Gastrocnemius medialis (tissue), 4 donors: ENCODE measurements at regions of chr18 and their contacts with region 1.

Region 1: DNA sequence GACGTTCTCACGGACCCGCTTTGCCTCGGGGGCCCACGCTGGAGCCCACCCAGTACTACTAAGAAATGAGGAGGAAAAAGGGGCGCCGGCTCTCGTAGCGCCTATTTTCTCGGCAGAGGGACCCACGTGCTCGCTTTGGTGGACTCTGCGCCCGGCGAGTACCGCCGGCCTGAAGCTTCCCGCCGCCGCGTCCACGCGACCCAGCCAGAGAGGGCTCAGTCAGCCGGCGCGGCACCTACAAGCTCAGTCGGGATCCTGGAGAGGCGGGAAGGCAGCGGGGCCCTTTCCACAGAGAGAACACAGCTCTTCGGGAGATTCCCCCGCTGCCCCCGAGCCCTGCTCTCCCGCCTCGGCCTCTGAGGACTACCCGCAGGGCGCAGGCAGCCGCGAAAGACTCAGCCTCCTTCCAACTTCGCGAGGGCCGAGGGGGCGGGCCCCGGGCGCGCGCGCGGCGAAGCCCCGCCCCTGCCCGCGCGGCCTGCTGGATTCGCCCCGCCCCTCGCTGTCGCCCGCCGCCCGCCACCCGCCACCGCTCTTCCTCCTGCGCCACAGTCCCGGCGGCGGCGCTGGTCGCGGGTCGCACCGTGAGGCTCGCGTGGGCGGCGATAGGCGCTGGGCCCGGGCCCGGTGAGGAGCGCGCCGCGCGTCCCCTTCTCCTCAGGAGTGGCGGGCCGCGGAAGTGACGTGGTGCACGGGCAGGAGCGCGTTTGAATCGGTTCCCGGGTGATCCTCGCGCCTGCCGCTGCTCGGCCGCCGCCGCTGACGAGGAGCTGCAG is at the start of gene SMCHD1:
- DNase-seq: peak; percentile 76 to 84
- ATAC-seq: peak; percentile 88 to 89
- H3K4me3 ChIP-seq: peak within 1 kb of the TSS; percentile 91 to 97 (median 93)
- H3K27ac ChIP-seq: peak within 1 kb of the TSS; percentile 93 to 99 (median 96)
- H3K4me1 ChIP-seq: peaks cover 25 to 30% of the 10 kb centered on the region in 2 donors
- H3K27me3 ChIP-seq: no peaks in the 10 kb centered on the region
- CTCF ChIP-seq: peak in 1 of 5 experiments; percentile 23
- POLR2A ChIP-seq: peak; percentile 89 to 93
- total RNA-seq, gene SMCHD1: 16.2 to 43.6 (median 22.7) TPM

Region 2: GRCh38 chr18:812376-813171 is 1842.8 kb before region 1 on chr18:
- in situ Hi-C with region 1: no loop called
- intact Hi-C with region 1: loop called (anchors 10 kb)
- DNase-seq: peak; percentile 62 to 77
- ATAC-seq: peak; percentile 69 to 76
- H3K4me3 ChIP-seq: peak overlapping the region; percentile 75 to 96 (median 86)
- H3K27ac ChIP-seq: peak overlapping the region; percentile 93 to 96 (median 94)
- H3K4me1 ChIP-seq: peaks cover 32 to 40% of the 10 kb centered on the region in 2 donors
- H3K27me3 ChIP-seq: no peaks in the 10 kb centered on the region
- CTCF ChIP-seq: no peak
- POLR2A ChIP-seq: peak; percentile 59 to 75

Region 3: GRCh38 chr18:2354292-2354691 is 301.1 kb before region 1 on chr18:
- in situ Hi-C with region 1: no loop called
- intact Hi-C with region 1: no loop called
- DNase-seq: no peak
- ATAC-seq: no peak
- H3K4me3 ChIP-seq: no peak overlapping the region
- H3K27ac ChIP-seq: no peak overlapping the region
- H3K4me1 ChIP-seq: no peaks in the 10 kb centered on the region
- H3K27me3 ChIP-seq: no peaks in the 10 kb centered on the region
- CTCF ChIP-seq: no peak
- POLR2A ChIP-seq: no peak

Region 4: DNA sequence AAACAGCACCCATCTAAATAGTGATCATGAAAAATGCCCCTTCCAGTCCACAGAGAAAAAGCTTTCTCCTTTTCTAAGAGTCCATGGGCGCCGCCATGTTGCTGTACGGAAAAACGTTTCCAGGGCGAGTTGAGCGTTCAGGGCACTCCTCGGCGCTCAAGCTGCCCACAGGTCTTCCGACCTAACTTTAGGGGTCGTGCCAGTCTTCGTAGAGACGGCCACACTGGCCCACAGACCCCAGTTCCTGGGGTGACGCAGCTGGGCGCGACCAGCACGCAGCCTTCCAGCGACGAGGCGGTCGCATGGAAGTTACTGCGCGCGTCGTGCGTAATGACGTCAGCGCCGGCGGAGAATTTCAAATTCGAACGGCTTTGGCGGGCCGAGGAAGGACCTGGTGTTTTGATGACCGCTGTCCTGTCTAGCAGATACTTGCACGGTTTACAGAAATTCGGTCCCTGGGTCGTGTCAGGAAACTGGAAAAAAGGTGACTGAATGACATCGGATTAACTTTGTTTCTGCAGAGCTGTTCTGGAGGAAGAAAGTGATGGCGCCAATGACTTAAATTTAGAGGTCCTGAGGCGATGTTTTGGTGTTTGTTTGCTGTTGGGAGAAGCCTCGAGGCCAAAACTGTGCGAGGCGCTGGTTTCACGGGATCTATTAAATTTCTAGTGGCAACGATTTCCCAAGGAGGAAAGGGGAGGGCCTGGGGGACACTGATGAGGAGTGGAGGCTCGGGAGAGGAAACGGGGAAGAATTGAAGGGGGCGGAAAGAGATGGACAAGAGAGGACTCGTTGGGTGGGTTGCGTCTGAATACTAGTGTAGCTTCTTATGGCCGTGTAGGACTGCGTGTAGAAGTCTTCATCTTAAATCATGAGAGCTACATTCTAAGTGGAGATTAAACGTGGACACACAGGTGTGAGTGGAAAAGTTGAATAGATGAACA is 83.9 kb before region 1 on chr18 and contains the starts of genes METTL4 and NDC80:
- in situ Hi-C with region 1: loop called in 1 of 4 experiments (anchors 5 kb)
- intact Hi-C with region 1: loop called (anchors 1 kb)
- DNase-seq: peak; percentile 62 to 71
- ATAC-seq: peak; percentile 91 to 93
- H3K4me3 ChIP-seq: peak within 1 kb of the TSS; percentile 59 to 85 (median 72)
- H3K27ac ChIP-seq: peak within 1 kb of the TSS; percentile 87 to 97 (median 90)
- H3K4me1 ChIP-seq: peaks cover 15 to 16% of the 10 kb centered on the region in 2 donors
- H3K27me3 ChIP-seq: no peaks in the 10 kb centered on the region
- CTCF ChIP-seq: no peak
- POLR2A ChIP-seq: peak; percentile 20 to 29
- total RNA-seq, gene METTL4: 1.4 to 2.9 (median 1.8) TPM
- total RNA-seq, gene NDC80: 0.27 TPM in 1 of 4 donors, not detected in the others

Region 5: GRCh38 chr18:3261371-3262246 is 606.2 kb after region 1 on chr18 and contains the start of gene MYL12B:
- in situ Hi-C with region 1: no loop called
- intact Hi-C with region 1: loop called (anchors 10 kb)
- DNase-seq: peak; percentile 61 to 73
- ATAC-seq: peak; percentile 79 to 89
- H3K4me3 ChIP-seq: peak within 1 kb of the TSS; percentile 73 to 98 (median 82)
- H3K27ac ChIP-seq: peak within 1 kb of the TSS; percentile 99
- H3K4me1 ChIP-seq: peaks cover 69 to 83% of the 10 kb centered on the region in 2 donors
- H3K27me3 ChIP-seq: no peaks in the 10 kb centered on the region
- CTCF ChIP-seq: peak in 4 of 5 experiments; percentile 12 to 36 (median 24)
- POLR2A ChIP-seq: peak; percentile 68 to 76
- total RNA-seq, gene MYL12B: 100 to 293 (median 185) TPM

Region 6: GRCh38 chr18:3447895-3448837 is 792.8 kb after region 1 on chr18:
- in situ Hi-C with region 1: no loop called
- intact Hi-C with region 1: loop called (anchors 10 kb)
- DNase-seq: peak; percentile 94 to 95
- ATAC-seq: peak; percentile 55 to 57
- H3K4me3 ChIP-seq: peak overlapping the region; percentile 71 to 97 (median 82)
- H3K27ac ChIP-seq: peak overlapping the region; percentile 98 to 99 (median 99)
- H3K4me1 ChIP-seq: peaks cover 8 to 13% of the 10 kb centered on the region in 2 donors
- H3K27me3 ChIP-seq: no peaks in the 10 kb centered on the region
- CTCF ChIP-seq: peak in 1 of 5 experiments; percentile 7
- POLR2A ChIP-seq: peak; percentile 97 to 98

Region 7: DNA sequence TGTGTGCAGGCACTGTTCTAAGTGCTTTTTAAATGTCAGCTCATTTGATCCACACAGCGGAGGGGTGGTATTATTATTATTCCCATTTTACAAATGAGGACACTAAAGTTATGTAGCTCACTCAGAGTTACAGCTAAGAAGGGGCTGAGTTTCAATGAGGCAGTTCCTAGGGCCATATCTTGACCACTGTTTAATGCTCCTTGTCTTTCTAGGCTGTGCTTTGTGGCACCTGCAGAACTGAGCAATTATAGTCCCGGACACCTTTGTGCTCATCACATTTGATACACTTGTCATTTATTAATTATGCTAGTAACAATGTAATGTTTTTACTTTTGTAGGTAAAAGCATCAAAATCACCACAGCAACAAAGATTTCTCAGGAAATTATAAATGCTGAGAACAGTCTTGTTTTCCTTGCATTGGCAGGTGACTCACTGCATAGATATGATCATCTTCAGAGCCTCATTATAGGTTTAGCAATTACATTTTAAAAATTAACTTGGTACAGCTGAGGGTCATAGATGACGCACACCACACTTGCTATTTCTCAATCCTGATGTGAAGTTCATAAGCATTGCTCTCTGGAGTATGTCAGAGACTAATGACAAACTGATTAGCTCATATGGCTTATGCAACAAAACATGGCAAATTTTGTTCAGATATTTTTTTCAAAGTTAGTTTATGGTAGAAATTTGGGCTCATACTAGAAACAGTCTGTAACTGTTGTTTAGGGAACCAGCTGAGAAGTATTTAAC is 1161.4 kb after region 1 on chr18:
- in situ Hi-C with region 1: no loop called
- intact Hi-C with region 1: no loop called
- DNase-seq: no peak
- ATAC-seq: no peak
- H3K4me3 ChIP-seq: no peak overlapping the region
- H3K27ac ChIP-seq: no peak overlapping the region
- H3K4me1 ChIP-seq: no peaks in the 10 kb centered on the region
- H3K27me3 ChIP-seq: no peaks in the 10 kb centered on the region
- CTCF ChIP-seq: no peak
- POLR2A ChIP-seq: no peak